CD8-positive, alpha-beta memory T cell (primary cell): ENCODE measurements at regions of chr5 and their contacts with region 1.

Region 1: DNA sequence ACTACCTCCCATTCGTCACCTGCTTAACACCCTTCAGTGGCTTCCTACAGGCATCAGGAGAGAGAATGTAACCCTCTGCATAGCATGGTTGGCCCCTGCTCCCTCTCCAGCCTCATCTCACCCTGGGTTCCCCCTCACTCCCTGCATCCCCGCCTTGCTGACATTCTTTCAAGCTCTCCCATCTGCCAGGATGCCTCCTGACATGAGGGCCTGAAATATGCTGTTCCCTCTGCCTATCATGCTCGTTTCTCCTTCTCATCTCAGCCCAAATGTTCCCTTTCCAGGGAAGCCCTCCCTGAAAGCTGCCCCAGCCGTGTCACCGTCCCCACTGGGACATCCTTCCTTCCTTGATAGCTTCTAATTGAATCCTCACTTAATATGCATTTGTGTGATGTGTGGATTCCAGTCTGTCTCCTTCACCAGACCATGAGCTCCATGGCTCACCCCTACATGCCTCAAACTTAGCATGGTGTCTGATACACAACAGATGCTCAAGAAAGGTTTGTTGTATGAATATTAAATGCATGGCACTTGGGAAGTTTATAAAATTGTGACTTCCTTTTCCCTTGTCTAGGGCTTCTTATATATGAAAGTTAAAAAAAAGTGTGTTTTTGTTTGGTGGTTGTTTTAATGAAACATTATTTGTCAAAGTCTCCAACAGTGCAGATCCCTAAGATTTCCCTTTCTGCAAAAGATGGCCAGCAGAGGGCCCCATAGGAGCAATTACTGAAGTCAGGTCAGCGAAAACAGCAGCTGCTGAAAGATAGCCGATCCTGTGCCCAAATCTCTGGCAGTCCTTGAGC is 7.3 kb upstream of the C5orf58 start:
- DNase-seq: peak; percentile 62 to 80 (median 63)
- H3K4me3 ChIP-seq: no peak overlapping the region
- H3K4me3 Mint-ChIP-seq: no peak overlapping the region
- H3K27ac ChIP-seq: no peak overlapping the region
- H3K27ac Mint-ChIP-seq: peak overlapping the region in 2 of 8 donors; percentile 5 to 74
- H3K4me1 ChIP-seq: no peaks in the 10 kb centered on the region
- H3K4me1 Mint-ChIP-seq: peaks cover 3 to 6% (median 4%) of the 10 kb centered on the region in 3 donors
- H3K27me3 ChIP-seq: no peaks in the 10 kb centered on the region
- H3K27me3 Mint-ChIP-seq: peaks cover 0 to 8% of the 10 kb centered on the region in 2 donors

Region 2: DNA sequence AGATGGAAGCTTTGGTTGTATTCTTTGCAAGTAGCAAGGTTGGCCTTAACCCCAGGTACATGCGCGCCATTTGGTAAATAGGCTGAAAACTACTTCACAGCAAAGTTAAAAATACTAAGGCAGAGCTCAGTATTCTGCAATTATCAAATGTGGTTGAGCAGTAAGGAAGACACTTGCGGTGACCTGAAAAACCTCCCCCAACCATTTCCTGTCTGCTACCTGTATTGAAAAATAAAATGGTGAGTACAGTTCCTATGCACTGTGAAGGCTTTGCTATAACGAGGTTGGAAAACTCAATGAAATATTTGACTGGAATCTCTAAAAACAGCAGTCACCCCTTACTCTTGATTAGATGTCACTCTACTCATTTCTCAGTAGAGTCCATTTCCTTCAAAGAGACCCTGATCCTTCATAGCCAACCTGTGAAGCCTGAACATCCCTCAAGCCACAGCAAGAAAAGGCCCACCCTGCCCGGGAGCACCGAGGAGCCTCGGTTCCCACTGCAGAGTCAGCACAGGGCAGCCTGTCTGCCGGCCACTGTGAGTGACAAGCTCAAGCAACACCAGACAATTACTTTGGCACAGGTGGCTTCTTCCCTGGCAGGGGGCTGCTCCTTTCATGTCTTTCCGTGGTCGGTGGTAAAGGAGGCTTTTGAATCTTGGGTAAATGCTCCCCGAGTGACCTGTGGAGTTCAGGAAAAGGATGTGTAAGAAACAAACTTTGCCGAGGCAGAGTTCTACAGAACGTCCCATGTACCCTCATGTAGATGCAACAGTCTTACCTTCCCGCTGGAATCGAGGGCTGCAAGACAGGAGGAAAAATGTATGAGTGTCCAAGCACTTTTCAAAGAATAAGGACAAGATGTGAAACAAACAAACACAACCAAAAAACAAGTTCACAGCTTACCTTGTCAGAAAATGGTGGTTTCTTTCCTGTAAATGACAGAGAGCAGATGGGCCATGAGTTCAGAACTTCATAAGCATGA is 36.8 kb after region 1 on chr5:
- CTCF ChIA-PET with region 1: interaction called, 55 read pairs
- POLR2A ChIA-PET with region 1: interaction called, 3 read pairs
- DNase-seq: peak in 4 of 5 donors; percentile 40 to 88 (median 78)
- H3K4me3 ChIP-seq: no peak overlapping the region
- H3K4me3 Mint-ChIP-seq: peak overlapping the region; percentile 54 to 80 (median 76)
- H3K27ac ChIP-seq: no peak overlapping the region
- H3K27ac Mint-ChIP-seq: peak overlapping the region; percentile 91 to 98 (median 96)
- H3K4me1 ChIP-seq: peaks cover 76% of the 10 kb centered on the region
- H3K4me1 Mint-ChIP-seq: peaks cover 80 to 91% (median 91%) of the 10 kb centered on the region in 3 donors
- H3K27me3 ChIP-seq: no peaks in the 10 kb centered on the region
- H3K27me3 Mint-ChIP-seq: peaks cover 0 to 2% of the 10 kb centered on the region in 2 donors

Region 3: DNA sequence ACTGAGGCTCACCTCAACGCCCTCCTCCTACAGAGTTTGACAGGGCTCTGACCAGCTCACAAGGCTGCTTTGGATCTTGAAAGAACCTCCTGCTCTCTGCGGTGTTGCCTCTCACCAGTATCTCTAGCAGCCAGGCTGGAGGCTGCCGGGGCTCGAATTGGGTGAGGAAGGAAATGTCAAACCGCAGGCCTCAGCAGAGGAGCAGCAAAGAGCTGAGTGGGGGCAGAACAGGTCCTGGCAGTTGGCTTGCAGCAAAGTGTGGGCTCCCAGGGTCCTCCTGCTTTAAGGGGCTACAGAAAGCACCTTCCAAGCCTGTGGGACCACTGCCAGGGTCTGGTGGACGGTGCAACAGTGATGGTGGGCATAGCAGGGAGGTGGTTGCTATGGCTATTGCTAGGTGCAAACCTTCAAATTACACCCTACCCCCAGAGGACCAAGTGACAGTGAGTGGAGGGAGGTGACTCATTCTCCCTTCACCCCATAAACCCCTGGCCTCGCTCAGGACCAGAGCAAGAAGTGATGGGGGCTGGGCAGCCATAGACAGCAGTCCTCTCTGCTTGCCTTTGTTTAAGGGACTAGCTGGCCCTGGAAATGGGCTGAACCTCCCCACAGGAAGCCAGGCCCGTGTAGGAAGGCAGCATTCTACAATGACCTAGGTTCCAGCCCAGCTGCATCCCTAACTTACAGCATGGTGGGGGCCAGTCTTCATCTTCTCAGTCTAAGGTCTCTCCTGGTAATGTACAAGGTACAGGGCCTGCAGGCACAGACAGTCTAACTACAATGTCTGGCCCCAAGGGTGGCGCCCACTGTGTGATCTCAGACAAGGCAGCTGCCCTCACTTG is 53.3 kb after region 1 on chr5:
- CTCF ChIA-PET with region 1: interaction called, 14 read pairs
- POLR2A ChIA-PET with region 1: no interaction called
- DNase-seq: peak; percentile 74 to 96 (median 93)
- H3K4me3 ChIP-seq: peak overlapping the region; percentile 55
- H3K4me3 Mint-ChIP-seq: peak overlapping the region; percentile 63 to 89 (median 85)
- H3K27ac ChIP-seq: peak overlapping the region; percentile 65
- H3K27ac Mint-ChIP-seq: peak overlapping the region; percentile 93 to 99 (median 97)
- H3K4me1 ChIP-seq: peaks cover 96% of the 10 kb centered on the region
- H3K4me1 Mint-ChIP-seq: peaks cover 94 to 99% (median 99%) of the 10 kb centered on the region in 3 donors
- H3K27me3 ChIP-seq: no peaks in the 10 kb centered on the region
- H3K27me3 Mint-ChIP-seq: peaks cover 0 to 1% of the 10 kb centered on the region in 2 donors

Region 4: DNA sequence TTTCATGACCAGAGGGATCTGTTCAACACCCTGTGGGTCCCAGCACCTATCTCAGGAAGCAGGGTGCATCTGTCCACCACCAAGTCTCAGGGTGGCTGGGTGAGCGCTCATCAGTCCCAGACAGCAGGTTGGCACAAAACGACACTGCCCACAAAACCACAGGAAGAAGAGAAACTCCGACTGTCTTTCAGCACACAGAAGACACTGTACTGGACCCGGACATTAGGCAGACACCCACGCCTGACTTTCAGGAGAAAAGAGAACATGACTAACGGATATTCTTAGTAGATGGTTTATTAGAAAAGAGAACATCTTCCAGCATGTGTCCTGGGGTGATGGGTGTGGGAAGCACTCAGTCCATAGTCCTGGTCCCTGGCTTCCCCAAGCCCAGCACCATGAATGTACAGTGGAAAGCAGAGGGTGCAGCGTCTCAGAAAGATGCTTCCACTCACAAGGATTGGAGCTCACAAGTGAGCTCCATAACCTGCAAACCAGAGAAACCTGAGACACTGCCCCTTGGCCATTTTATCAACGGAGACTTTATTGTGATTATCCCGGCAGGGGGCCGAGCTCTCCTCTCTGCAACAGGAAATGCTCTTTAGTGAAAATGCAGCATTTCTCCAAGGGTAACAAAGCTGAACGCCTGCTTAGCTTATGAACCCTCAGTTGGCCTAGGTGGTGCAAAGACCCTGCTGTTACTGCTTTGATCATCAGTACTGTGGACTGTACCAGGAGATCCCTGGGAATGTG is 107.8 kb after region 1 on chr5:
- CTCF ChIA-PET with region 1: interaction called, 172 read pairs
- POLR2A ChIA-PET with region 1: interaction called, 8 read pairs
- DNase-seq: peak; percentile 47 to 85 (median 62)
- H3K4me3 ChIP-seq: peak overlapping the region; percentile 6
- H3K4me3 Mint-ChIP-seq: peak overlapping the region in 6 of 7 donors; percentile 35 to 85 (median 75)
- H3K27ac ChIP-seq: peak overlapping the region; percentile 29
- H3K27ac Mint-ChIP-seq: no peak overlapping the region
- H3K4me1 ChIP-seq: peaks cover 97% of the 10 kb centered on the region
- H3K4me1 Mint-ChIP-seq: peaks cover 29 to 59% (median 30%) of the 10 kb centered on the region in 3 donors
- H3K27me3 ChIP-seq: no peaks in the 10 kb centered on the region
- H3K27me3 Mint-ChIP-seq: peaks cover 0 to 1% of the 10 kb centered on the region in 2 donors